Panc1 (cell line): ENCODE measurements at regions of chr10 and their contacts with region 1.

Region 1: GRCh38 chr10:114678820-114679219 is 20.7 kb upstream of the ABLIM1 start:
- DNase-seq: no peak
- ATAC-seq: peak; percentile 55
- H3K4me3 ChIP-seq: no peak overlapping the region
- H3K27ac ChIP-seq: peak overlapping the region; percentile 100
- H3K4me1 ChIP-seq: peaks cover 61% of the 10 kb centered on the region
- H3K27me3 ChIP-seq: no peaks in the 10 kb centered on the region
- CTCF ChIP-seq: no peak

Region 2: DNA sequence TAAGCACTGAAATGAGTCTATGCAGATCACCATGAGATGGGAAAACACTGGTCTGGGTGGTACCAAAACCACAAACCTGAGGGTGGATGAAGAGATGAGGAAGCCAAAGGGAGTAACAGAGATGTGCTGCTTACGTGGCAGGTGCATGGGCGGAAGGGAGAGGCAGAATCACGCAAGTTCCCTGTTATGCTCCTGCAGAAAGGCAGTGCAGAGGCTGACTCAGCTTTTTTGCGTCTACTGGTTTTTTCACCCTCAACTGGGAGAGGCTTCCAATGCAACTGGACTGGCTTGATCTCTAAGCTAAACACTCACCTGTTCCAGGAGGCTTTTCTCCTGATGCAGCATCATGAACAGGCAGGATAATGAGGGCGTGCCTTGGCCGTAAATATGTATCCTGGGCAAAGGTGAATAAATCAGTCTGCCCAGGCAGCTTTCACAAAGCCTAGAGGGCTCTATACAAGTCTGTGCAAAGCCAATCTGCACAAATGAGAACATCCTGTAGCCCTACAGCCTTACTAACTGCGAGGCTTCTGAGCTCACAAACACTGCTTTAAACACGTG is 179.1 kb before region 1 on chr10:
- CTCF ChIA-PET with region 1: no interaction called
- POLR2A ChIA-PET with region 1: interaction called, 12 read pairs
- in situ Hi-C with region 1: no loop called
- intact Hi-C with region 1: no loop called
- DNase-seq: no peak
- ATAC-seq: peak; percentile 22; the same call in 1 of the 2 replicates
- H3K4me3 ChIP-seq: no peak overlapping the region
- H3K27ac ChIP-seq: no peak overlapping the region
- H3K4me1 ChIP-seq: no peaks in the 10 kb centered on the region
- H3K27me3 ChIP-seq: no peaks in the 10 kb centered on the region
- CTCF ChIP-seq: no peak

Region 3: DNA sequence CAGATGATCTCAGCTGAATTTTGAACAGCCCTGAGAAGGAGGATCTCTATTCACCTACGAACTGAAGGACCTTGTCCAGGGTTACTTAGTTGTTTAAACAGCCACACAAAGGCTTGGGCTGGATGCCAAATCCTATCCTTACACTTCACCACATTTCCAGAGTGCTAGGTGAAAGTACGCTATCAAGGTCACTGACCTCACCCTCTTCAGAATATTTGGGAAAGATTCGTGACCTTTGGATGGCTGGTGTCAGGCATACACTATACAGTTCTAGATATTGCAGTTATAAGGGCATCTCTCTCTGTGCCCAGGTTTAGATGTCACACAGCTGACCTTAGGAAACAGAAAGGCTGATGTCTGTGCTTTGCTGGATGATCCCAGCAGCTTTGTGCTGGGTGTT is 40.5 kb after region 1 on chr10:
- CTCF ChIA-PET with region 1: no interaction called
- POLR2A ChIA-PET with region 1: no interaction called
- in situ Hi-C with region 1: no loop called
- intact Hi-C with region 1: no loop called
- DNase-seq: no peak
- ATAC-seq: peak; percentile 15; the same call in 1 of the 2 replicates
- H3K4me3 ChIP-seq: no peak overlapping the region
- H3K27ac ChIP-seq: peak overlapping the region; percentile 100
- H3K4me1 ChIP-seq: peaks cover 92% of the 10 kb centered on the region
- H3K27me3 ChIP-seq: no peaks in the 10 kb centered on the region
- CTCF ChIP-seq: no peak